B cell (primary cell): ENCODE measurements at regions of chr19 and their contacts with region 1.

Region 1: DNA sequence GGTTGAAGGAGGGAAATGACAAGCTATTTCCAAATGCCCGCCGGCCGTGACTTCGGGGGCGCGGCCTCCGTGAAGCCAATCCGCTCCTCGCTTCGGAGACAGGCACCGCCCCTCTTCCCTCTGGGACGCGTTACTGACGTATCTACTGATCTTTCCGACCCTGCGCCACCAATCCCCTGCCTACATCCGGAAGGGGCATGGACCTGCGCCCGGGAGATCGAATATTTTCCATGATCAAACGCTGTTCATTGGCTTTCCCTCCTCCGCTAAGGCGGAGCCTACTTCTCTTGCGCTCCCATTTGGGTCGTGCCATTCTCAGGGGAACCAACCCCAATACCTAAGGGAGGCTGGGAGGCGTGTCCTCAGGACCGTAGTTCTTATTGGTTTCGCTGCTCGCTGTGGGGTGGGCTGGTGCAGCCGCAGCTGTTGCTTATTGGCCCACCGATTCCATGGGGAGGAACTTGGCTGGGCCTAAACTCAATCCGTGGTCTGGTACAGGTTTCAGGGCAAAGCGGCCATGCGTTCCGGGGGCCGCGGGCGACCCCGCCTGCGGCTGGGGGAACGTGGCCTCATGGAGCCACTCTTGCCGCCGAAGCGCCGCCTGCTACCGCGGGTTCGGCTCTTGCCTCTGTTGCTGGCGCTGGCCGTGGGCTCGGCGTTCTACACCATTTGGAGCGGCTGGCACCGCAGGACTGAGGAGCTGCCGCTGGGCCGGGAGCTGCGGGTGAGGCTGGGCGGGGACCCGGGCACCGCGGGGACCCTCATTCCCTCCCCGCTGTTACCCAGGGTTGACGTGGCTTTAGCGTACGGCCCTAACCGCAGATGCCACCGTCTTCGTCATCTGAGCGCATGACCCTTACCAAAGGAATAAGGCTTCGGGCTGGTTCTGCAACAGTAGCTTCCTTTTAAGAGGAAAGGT is at the start of gene QPCTL:
- DNase-seq: peak; percentile 99
- ATAC-seq: peak; percentile 85
- H3K4me3 ChIP-seq: peak within 1 kb of the TSS; percentile 81 to 96 (median 88)
- H3K4me3 Mint-ChIP-seq: peak within 1 kb of the TSS; percentile 93
- H3K27ac ChIP-seq: peak within 1 kb of the TSS; percentile 89 to 94
- H3K27ac Mint-ChIP-seq: peak within 1 kb of the TSS; percentile 92
- H3K4me1 ChIP-seq: peaks cover 15 to 22% of the 10 kb centered on the region in 2 donors
- H3K4me1 Mint-ChIP-seq: peaks cover 28% of the 10 kb centered on the region
- H3K27me3 ChIP-seq: no peaks in the 10 kb centered on the region
- H3K27me3 Mint-ChIP-seq: no peaks in the 10 kb centered on the region
- CTCF ChIP-seq: no peak
- total RNA-seq, gene QPCTL: 50.9 and 61.3 TPM in 2 replicates

Region 2: GRCh38 chr19:45370410-45371204 is 321.8 kb before region 1 on chr19 and contains the start of gene ERCC2:
- CTCF ChIA-PET with region 1: no interaction called
- POLR2A ChIA-PET with region 1: no interaction called
- intact Hi-C with region 1: loop called (anchors 5 kb)
- DNase-seq: peak; percentile 99
- ATAC-seq: peak; percentile 97
- H3K4me3 ChIP-seq: peak within 1 kb of the TSS; percentile 55 to 83 (median 75)
- H3K4me3 Mint-ChIP-seq: peak within 1 kb of the TSS; percentile 94
- H3K27ac ChIP-seq: peak within 1 kb of the TSS; percentile 69 to 85
- H3K27ac Mint-ChIP-seq: peak within 1 kb of the TSS; percentile 92
- H3K4me1 ChIP-seq: peaks cover 3 to 12% of the 10 kb centered on the region in 2 donors
- H3K4me1 Mint-ChIP-seq: peaks cover 12% of the 10 kb centered on the region
- H3K27me3 ChIP-seq: no peaks in the 10 kb centered on the region
- H3K27me3 Mint-ChIP-seq: no peaks in the 10 kb centered on the region
- CTCF ChIP-seq: no peak
- total RNA-seq, gene ERCC2: 26.5 and 27.6 TPM in 2 replicates

Region 3: GRCh38 chr19:45523642-45524256 is 168.7 kb before region 1 on chr19:
- CTCF ChIA-PET with region 1: interaction called, 6 read pairs
- POLR2A ChIA-PET with region 1: no interaction called
- intact Hi-C with region 1: loop called (anchors 1 kb)
- DNase-seq: peak; percentile 91
- ATAC-seq: peak; percentile 99
- H3K4me3 ChIP-seq: no peak overlapping the region
- H3K4me3 Mint-ChIP-seq: no peak overlapping the region
- H3K27ac ChIP-seq: peak overlapping the region in 1 of 2 donors; percentile 39
- H3K27ac Mint-ChIP-seq: peak overlapping the region; percentile 85
- H3K4me1 ChIP-seq: peaks cover 8 to 16% of the 10 kb centered on the region in 2 donors
- H3K4me1 Mint-ChIP-seq: peaks cover 23% of the 10 kb centered on the region
- H3K27me3 ChIP-seq: no peaks in the 10 kb centered on the region
- H3K27me3 Mint-ChIP-seq: no peaks in the 10 kb centered on the region
- CTCF ChIP-seq: peak; percentile 89

Region 4: DNA sequence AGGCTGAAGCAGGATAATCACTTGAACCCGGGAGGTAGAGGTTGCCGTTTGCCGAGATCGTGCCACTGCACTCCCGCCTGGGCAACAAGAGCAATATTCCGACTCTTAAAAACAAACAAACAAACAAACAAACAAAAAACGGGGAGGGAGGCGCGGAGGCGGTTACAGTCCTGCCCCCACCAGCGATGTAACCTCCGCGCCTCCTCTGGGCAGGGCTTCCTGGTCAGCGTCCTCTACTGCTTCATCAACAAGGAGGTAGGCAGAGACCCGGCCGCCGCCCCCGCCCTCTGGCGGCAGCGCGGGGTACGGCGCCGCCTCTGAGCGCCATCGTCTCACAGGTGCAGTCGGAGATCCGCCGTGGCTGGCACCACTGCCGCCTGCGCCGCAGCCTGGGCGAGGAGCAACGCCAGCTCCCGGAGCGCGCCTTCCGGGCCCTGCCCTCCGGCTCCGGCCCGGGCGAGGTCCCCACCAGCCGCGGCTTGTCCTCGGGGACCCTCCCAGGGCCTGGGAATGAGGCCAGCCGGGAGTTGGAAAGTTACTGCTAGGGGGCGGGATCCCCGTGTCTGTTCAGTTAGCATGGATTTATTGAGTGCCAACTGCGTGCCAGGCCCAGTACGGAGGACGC is 10.9 kb before region 1 on chr19:
- CTCF ChIA-PET with region 1: interaction called, 40 read pairs
- POLR2A ChIA-PET with region 1: interaction called, 7 read pairs
- intact Hi-C with region 1: loop called (anchors 1 kb)
- DNase-seq: peak; percentile 92
- ATAC-seq: peak; percentile 95
- H3K4me3 ChIP-seq: peak overlapping the region in 4 of 5 experiments; percentile 29 to 57 (median 46)
- H3K4me3 Mint-ChIP-seq: peak overlapping the region; percentile 87
- H3K27ac ChIP-seq: no peak overlapping the region
- H3K27ac Mint-ChIP-seq: peak overlapping the region; percentile 50
- H3K4me1 ChIP-seq: peaks cover 24 to 31% of the 10 kb centered on the region in 2 donors
- H3K4me1 Mint-ChIP-seq: peaks cover 23% of the 10 kb centered on the region
- H3K27me3 ChIP-seq: peaks cover 0 to 27% (median 10%) of the 10 kb centered on the region in 4 experiments
- H3K27me3 Mint-ChIP-seq: peaks cover 13% of the 10 kb centered on the region
- CTCF ChIP-seq: peak; percentile 98

Region 5: GRCh38 chr19:45770192-45771101 is 78.0 kb after region 1 on chr19:
- CTCF ChIA-PET with region 1: interaction called, 25 read pairs
- POLR2A ChIA-PET with region 1: interaction called, 4 read pairs
- intact Hi-C with region 1: loop called (anchors 1 kb)
- DNase-seq: peak; percentile 95
- ATAC-seq: peak; percentile 68
- H3K4me3 ChIP-seq: peak overlapping the region in 4 of 5 experiments; percentile 71 to 88 (median 82)
- H3K4me3 Mint-ChIP-seq: peak overlapping the region; percentile 90
- H3K27ac ChIP-seq: peak overlapping the region; percentile 29 to 56
- H3K27ac Mint-ChIP-seq: peak overlapping the region; percentile 86
- H3K4me1 ChIP-seq: peaks cover 12 to 32% of the 10 kb centered on the region in 2 donors
- H3K4me1 Mint-ChIP-seq: peaks cover 29% of the 10 kb centered on the region
- H3K27me3 ChIP-seq: peaks cover 0 to 28% (median 8%) of the 10 kb centered on the region in 4 experiments
- H3K27me3 Mint-ChIP-seq: no peaks in the 10 kb centered on the region
- CTCF ChIP-seq: peak; percentile 96